Activated T-helper 1 cell treated with anti-CD3 and anti-CD28 coated beads, Interleukin-12 subunit alpha, Interleukin-12 subunit beta, Interleukin-2, Interleukin-4 antibody, amounts not matched to agents 30 ng/mL and 10 ng/mL and 1 ng/mL, durations not matched to agents 14 hours and 24 hours and 36 hours (primary cell): ENCODE measurements at regions of chr14 and their contacts with region 1.

Region 1: GRCh38 chr14:60753264-60754119 is 18.9 kb downstream of the MNAT1 start:
- DNase-seq: peak; percentile 66
- H3K4me3 Mint-ChIP-seq: peak overlapping the region; percentile 66
- H3K27ac Mint-ChIP-seq: peak overlapping the region; percentile 90
- H3K4me1 Mint-ChIP-seq: peaks cover 53% of the 10 kb centered on the region
- H3K27me3 Mint-ChIP-seq: peaks cover 5% of the 10 kb centered on the region

Region 2: GRCh38 chr14:60724137-60724619 is 29.3 kb before region 1 on chr14 and contains the start of gene SIX4:
- intact Hi-C with region 1: loop called (anchors 1 kb)
- DNase-seq: no peak
- H3K4me3 Mint-ChIP-seq: peak within 1 kb of the TSS; percentile 91
- H3K27ac Mint-ChIP-seq: peak within 1 kb of the TSS; percentile 67
- H3K4me1 Mint-ChIP-seq: peaks cover 25% of the 10 kb centered on the region
- H3K27me3 Mint-ChIP-seq: peaks cover 75% of the 10 kb centered on the region
- total RNA-seq, gene SIX4: 0.57 and 1.1 TPM in 2 replicates

Region 3: GRCh38 chr14:60859525-60859924 is 106.0 kb after region 1 on chr14:
- intact Hi-C with region 1: loop called (anchors 1 kb)
- DNase-seq: no peak
- H3K4me3 Mint-ChIP-seq: no peak overlapping the region
- H3K27ac Mint-ChIP-seq: no peak overlapping the region
- H3K4me1 Mint-ChIP-seq: peaks cover 28% of the 10 kb centered on the region
- H3K27me3 Mint-ChIP-seq: peaks cover 2% of the 10 kb centered on the region

Region 4: GRCh38 chr14:60965402-60965801 is 211.9 kb after region 1 on chr14:
- intact Hi-C with region 1: loop called (anchors 1 kb)
- DNase-seq: no peak
- H3K4me3 Mint-ChIP-seq: no peak overlapping the region
- H3K27ac Mint-ChIP-seq: no peak overlapping the region
- H3K4me1 Mint-ChIP-seq: peaks cover 16% of the 10 kb centered on the region
- H3K27me3 Mint-ChIP-seq: no peaks in the 10 kb centered on the region

Region 5: GRCh38 chr14:61103481-61104339 is 350.2 kb after region 1 on chr14:
- intact Hi-C with region 1: loop called (anchors 5 kb)
- DNase-seq: peak; percentile 25
- H3K4me3 Mint-ChIP-seq: peak overlapping the region; percentile 35
- H3K27ac Mint-ChIP-seq: peak overlapping the region; percentile 82
- H3K4me1 Mint-ChIP-seq: peaks cover 38% of the 10 kb centered on the region
- H3K27me3 Mint-ChIP-seq: no peaks in the 10 kb centered on the region

Region 6: GRCh38 chr14:61342486-61342885 is 589.0 kb after region 1 on chr14:
- intact Hi-C with region 1: loop called (anchors 5 kb)
- DNase-seq: peak; percentile 85
- H3K4me3 Mint-ChIP-seq: peak overlapping the region; percentile 82
- H3K27ac Mint-ChIP-seq: peak overlapping the region; percentile 97
- H3K4me1 Mint-ChIP-seq: peaks cover 92% of the 10 kb centered on the region
- H3K27me3 Mint-ChIP-seq: no peaks in the 10 kb centered on the region